ENCODE measurements at regions of chr4 and their contacts with region 1.

Region 1: GRCh38 chr4:53490965-53491622 is 100.2 kb downstream of the LNX1 start:
- DNase-seq: peak; percentile 69
- H3K4me3 ChIP-seq: no peak overlapping the region
- H3K27ac ChIP-seq: no peak overlapping the region
- H3K4me1 ChIP-seq: peaks cover 4% of the 10 kb centered on the region
- H3K27me3 ChIP-seq: no peaks in the 10 kb centered on the region
- CTCF ChIP-seq: peak; percentile 70 to 84

Region 2: DNA sequence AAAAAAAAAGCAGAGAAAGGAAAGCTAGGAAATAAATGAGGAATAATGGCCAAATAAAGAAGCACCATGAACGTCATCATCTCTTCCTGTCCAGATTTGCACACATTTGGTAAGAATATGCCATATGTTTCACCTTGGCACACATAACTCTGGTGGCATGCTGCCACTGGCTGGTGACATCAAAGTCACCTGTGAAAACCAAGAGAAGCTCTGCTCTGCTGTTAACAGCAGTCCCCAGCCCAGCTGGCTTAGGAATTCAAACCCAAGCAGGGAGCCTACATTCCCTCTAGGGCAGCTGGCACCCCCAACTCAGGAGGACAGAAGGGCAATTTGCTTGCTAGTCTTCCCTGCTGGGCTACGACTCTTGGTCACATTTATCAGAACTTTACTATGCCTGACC is 551.4 kb before region 1 on chr4:
- CTCF ChIA-PET with region 1: no interaction called
- dilution Hi-C with region 1: no loop called
- in situ Hi-C with region 1: no loop called
- intact Hi-C with region 1: no loop called
- DNase-seq: no peak
- H3K4me3 ChIP-seq: no peak overlapping the region
- H3K27ac ChIP-seq: no peak overlapping the region
- H3K4me1 ChIP-seq: no peaks in the 10 kb centered on the region
- H3K27me3 ChIP-seq: no peaks in the 10 kb centered on the region
- CTCF ChIP-seq: no peak

Region 3: GRCh38 chr4:53522336-53522735 is 31.2 kb after region 1 on chr4:
- CTCF ChIA-PET with region 1: no interaction called
- dilution Hi-C with region 1: no loop called
- in situ Hi-C with region 1: no loop called
- intact Hi-C with region 1: no loop called
- DNase-seq: no peak
- H3K4me3 ChIP-seq: no peak overlapping the region
- H3K27ac ChIP-seq: no peak overlapping the region
- H3K4me1 ChIP-seq: no peaks in the 10 kb centered on the region
- H3K27me3 ChIP-seq: no peaks in the 10 kb centered on the region
- CTCF ChIP-seq: no peak

Region 4: GRCh38 chr4:53601251-53601764 is 110.2 kb after region 1 on chr4:
- CTCF ChIA-PET with region 1: no interaction called
- dilution Hi-C with region 1: no loop called
- in situ Hi-C with region 1: loop called in 1 of 2 experiments (anchors 25 kb)
- intact Hi-C with region 1: loop called (anchors 5 kb)
- DNase-seq: no peak
- H3K4me3 ChIP-seq: no peak overlapping the region
- H3K27ac ChIP-seq: no peak overlapping the region
- H3K4me1 ChIP-seq: no peaks in the 10 kb centered on the region
- H3K27me3 ChIP-seq: no peaks in the 10 kb centered on the region
- CTCF ChIP-seq: peak; percentile 39 to 61